ENCODE measurements at regions of chr6 and their contacts with region 1.

Region 1: DNA sequence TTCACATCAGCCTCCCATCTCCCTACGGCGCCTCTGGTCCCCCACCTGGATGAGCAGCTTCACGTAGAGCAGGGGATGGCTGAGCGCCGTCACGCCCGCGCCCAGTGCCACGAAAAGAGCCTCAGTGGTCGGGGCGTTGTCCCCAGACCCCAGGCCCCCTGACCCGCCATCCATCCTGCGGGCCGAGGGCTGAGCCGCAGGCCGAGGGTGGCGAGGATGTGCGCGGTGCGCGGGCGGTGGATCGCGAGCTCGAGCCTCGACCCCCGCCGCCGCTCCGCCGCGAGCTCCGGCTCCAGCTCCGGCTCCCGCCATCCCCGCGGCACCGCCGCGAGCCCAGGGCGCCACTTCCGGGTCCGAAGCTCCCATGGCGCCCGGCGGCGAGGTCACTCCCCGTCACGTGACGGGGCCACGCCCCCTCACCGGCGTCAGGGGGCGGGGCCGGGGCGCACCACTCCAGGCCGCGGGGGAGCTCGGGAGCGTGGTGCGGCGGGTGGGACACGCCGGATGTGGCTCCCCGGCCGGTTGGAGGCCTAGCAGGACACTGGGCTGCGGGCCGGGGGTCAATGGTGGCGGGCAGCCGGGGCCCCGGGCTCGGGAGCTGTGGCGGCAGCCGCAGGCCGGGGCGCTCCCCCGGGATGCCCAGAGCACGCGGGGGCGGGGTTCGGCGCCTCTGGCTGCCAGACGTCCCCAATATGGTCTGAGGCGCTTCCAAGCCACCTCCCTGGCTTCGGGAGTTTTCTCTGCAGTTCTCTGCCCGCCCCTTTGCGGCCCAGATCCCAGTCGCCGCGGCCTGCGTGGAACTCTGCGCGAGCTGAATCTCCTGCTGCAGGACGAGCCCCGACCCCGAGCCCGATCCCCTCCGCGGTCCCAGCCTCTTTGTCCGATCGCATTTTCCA is at the start of gene MTCH1:
- DNase-seq: peak; percentile 91
- H3K4me3 ChIP-seq: peak within 1 kb of the TSS; percentile 99
- H3K27ac ChIP-seq: peak within 1 kb of the TSS; percentile 99
- H3K4me1 ChIP-seq: peaks cover 14% of the 10 kb centered on the region
- H3K27me3 ChIP-seq: no peaks in the 10 kb centered on the region
- CTCF ChIP-seq: no peak
- total RNA-seq, gene MTCH1: 219 and 242 TPM in 2 replicates

Region 2: GRCh38 chr6:37190159-37190535 is 204.1 kb after region 1 on chr6:
- CTCF ChIA-PET with region 1: interaction called, 13 read pairs
- POLR2A ChIA-PET with region 1: no interaction called
- intact Hi-C with region 1: no loop called
- DNase-seq: no peak
- H3K4me3 ChIP-seq: no peak overlapping the region
- H3K27ac ChIP-seq: no peak overlapping the region
- H3K4me1 ChIP-seq: no peaks in the 10 kb centered on the region
- H3K27me3 ChIP-seq: no peaks in the 10 kb centered on the region
- CTCF ChIP-seq: no peak

Measured in A673 (cell line).